ENCODE measurements at regions of chr5 and their contacts with region 1.

Region 1: GRCh38 chr5:163306421-163306820 is 131.0 kb upstream of the CCNG1 start:
- DNase-seq: no peak
- H3K4me3 Mint-ChIP-seq: no peak overlapping the region
- H3K27ac Mint-ChIP-seq: no peak overlapping the region
- H3K4me1 Mint-ChIP-seq: peaks cover 14% of the 10 kb centered on the region
- H3K27me3 Mint-ChIP-seq: peaks cover 3% of the 10 kb centered on the region

Region 2: GRCh38 chr5:162939991-162940390 is 366.4 kb before region 1 on chr5:
- CTCF ChIA-PET with region 1: no interaction called
- POLR2A ChIA-PET with region 1: no interaction called
- DNase-seq: no peak
- H3K4me3 Mint-ChIP-seq: no peak overlapping the region
- H3K27ac Mint-ChIP-seq: no peak overlapping the region
- H3K4me1 Mint-ChIP-seq: no peaks in the 10 kb centered on the region
- H3K27me3 Mint-ChIP-seq: no peaks in the 10 kb centered on the region

Region 3: GRCh38 chr5:163347671-163348070 is 41.2 kb after region 1 on chr5:
- CTCF ChIA-PET with region 1: interaction called, 14 read pairs
- POLR2A ChIA-PET with region 1: no interaction called
- DNase-seq: peak; percentile 60
- H3K4me3 Mint-ChIP-seq: no peak overlapping the region
- H3K27ac Mint-ChIP-seq: no peak overlapping the region
- H3K4me1 Mint-ChIP-seq: no peaks in the 10 kb centered on the region
- H3K27me3 Mint-ChIP-seq: peaks cover 1% of the 10 kb centered on the region

Measured in activated CD4-positive, alpha-beta memory T cell treated with anti-CD3 and anti-CD28 coated beads, Interleukin-2, amount 10 ng/mL, durations not matched to agents 7 days and 5 days (primary cell).